ENCODE measurements at regions of chr20 and their contacts with region 1.

Region 1: GRCh38 chr20:41030531-41031244 is 2.1 kb downstream of the TOP1 start:
- DNase-seq: no peak
- ATAC-seq: no peak

Region 2: GRCh38 chr20:40600441-40601219 is 430.1 kb before region 1 on chr20:
- intact Hi-C with region 1: no loop called
- DNase-seq: no peak
- ATAC-seq: no peak

Region 3: GRCh38 chr20:40754339-40754943 is 276.2 kb before region 1 on chr20:
- intact Hi-C with region 1: no loop called
- DNase-seq: peak; percentile 75
- ATAC-seq: peak; percentile 69 to 79

Region 4: GRCh38 chr20:41061155-41061554 is 30.5 kb after region 1 on chr20:
- intact Hi-C with region 1: no loop called
- DNase-seq: no peak
- ATAC-seq: no peak

Region 5: GRCh38 chr20:41072190-41072863 is 41.6 kb after region 1 on chr20:
- intact Hi-C with region 1: loop called in 1 of 2 experiments (anchors 2 kb)
- DNase-seq: peak; percentile 30
- ATAC-seq: peak; percentile 86 to 89